AG04450 (cell line): ENCODE measurements at regions of chr20 and their contacts with region 1.

Region 1: GRCh38 chr20:45011108-45011526 is 44.8 kb downstream of the STK4 start:
- DNase-seq: peak; percentile 39
- H3K4me3 ChIP-seq: no peak overlapping the region
- H3K27ac ChIP-seq: peak overlapping the region; percentile 76
- H3K27me3 ChIP-seq: no peaks in the 10 kb centered on the region
- CTCF ChIP-seq: peak; percentile 76

Region 2: DNA sequence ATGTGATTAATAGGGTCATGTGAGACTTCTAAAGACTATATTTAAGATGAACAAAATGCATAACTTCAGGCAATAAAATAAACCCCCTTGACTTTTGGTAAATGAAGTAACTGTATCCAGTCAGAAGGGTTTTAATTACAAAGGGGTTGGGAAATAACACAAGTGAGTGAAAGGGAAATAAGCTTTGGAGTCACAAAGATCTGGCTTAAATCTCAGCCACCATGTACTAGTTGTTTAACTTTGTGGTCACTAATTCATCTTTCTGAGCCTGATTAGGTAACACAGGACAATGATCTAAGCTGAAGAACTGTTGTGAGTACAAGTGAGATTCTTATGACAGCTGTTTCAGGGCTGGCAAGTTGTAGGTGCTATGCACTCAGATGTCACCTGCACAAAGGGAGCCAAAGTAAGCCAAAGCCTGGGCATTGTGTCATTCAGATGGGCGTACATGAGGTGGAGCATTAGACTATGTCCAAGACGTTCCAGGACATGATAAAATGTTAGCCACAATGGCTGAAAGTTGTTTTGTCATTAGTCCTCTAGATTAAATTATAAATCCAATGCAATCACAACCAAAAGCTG is 64.8 kb before region 1 on chr20:
- CTCF ChIA-PET with region 1: no interaction called
- POLR2A ChIA-PET with region 1: interaction called, 10 read pairs
- DNase-seq: no peak
- H3K4me3 ChIP-seq: no peak overlapping the region
- H3K27ac ChIP-seq: no peak overlapping the region
- H3K27me3 ChIP-seq: no peaks in the 10 kb centered on the region
- CTCF ChIP-seq: no peak

Region 3: GRCh38 chr20:44979090-44979621 is 32.0 kb before region 1 on chr20:
- CTCF ChIA-PET with region 1: interaction called, 12 read pairs
- POLR2A ChIA-PET with region 1: no interaction called
- DNase-seq: no peak
- H3K4me3 ChIP-seq: no peak overlapping the region
- H3K27ac ChIP-seq: no peak overlapping the region
- H3K27me3 ChIP-seq: no peaks in the 10 kb centered on the region
- CTCF ChIP-seq: no peak

Region 4: GRCh38 chr20:44993343-44993742 is 17.8 kb before region 1 on chr20:
- CTCF ChIA-PET with region 1: interaction called, 13 read pairs
- POLR2A ChIA-PET with region 1: no interaction called
- DNase-seq: no peak
- H3K4me3 ChIP-seq: no peak overlapping the region
- H3K27ac ChIP-seq: no peak overlapping the region
- H3K27me3 ChIP-seq: no peaks in the 10 kb centered on the region
- CTCF ChIP-seq: no peak

Region 5: GRCh38 chr20:45036044-45036755 is 25.1 kb after region 1 on chr20:
- CTCF ChIA-PET with region 1: interaction called, 63 read pairs
- POLR2A ChIA-PET with region 1: no interaction called
- DNase-seq: peak; percentile 42
- H3K4me3 ChIP-seq: no peak overlapping the region
- H3K27ac ChIP-seq: peak overlapping the region; percentile 33
- H3K27me3 ChIP-seq: no peaks in the 10 kb centered on the region
- CTCF ChIP-seq: no peak

Region 6: DNA sequence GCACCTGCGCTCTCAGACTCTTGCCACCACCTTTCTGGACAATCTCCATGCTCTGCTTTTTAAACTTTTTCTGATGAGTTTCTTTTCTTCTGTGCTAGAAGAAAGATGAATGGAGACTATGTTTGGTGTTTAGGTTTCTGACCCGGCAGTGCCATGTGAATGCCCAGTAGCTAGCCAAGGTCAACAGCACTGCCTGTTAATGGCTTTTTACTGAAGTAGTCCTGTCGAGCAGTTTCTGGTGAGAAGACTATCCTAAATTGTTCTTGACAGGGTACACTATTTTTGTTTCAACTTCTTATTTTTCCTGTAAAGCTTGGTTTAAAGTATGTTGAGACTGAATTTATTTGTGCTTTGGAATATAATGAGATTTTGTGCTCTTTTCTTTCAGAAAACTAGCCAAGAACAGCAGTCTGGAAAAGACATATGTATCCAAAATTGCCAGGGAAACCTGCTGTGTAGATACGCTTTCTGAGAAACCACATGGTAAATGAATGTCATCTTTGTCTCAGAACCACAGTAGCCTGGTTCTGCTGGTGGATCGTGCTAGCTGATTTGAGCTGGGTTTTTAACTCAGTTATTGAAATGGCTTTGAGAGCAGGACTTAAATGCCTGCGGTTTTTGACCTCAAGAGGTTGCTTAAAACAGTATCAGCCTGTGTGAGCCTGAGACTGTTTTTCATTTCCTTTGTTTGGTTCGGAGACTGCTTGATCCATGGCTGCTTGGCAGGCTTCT is 41.7 kb after region 1 on chr20:
- CTCF ChIA-PET with region 1: interaction called, 10 read pairs
- POLR2A ChIA-PET with region 1: no interaction called
- DNase-seq: no peak
- H3K4me3 ChIP-seq: no peak overlapping the region
- H3K27ac ChIP-seq: peak overlapping the region; percentile 11
- H3K27me3 ChIP-seq: no peaks in the 10 kb centered on the region
- CTCF ChIP-seq: no peak

Region 7: GRCh38 chr20:45111799-45112471 is 100.8 kb after region 1 on chr20:
- CTCF ChIA-PET with region 1: interaction called, 23 read pairs
- POLR2A ChIA-PET with region 1: no interaction called
- DNase-seq: no peak
- H3K4me3 ChIP-seq: no peak overlapping the region
- H3K27ac ChIP-seq: no peak overlapping the region
- H3K27me3 ChIP-seq: peaks cover 8% of the 10 kb centered on the region
- CTCF ChIP-seq: peak; percentile 51; the same call in 1 of the 2 replicates

Region 8: DNA sequence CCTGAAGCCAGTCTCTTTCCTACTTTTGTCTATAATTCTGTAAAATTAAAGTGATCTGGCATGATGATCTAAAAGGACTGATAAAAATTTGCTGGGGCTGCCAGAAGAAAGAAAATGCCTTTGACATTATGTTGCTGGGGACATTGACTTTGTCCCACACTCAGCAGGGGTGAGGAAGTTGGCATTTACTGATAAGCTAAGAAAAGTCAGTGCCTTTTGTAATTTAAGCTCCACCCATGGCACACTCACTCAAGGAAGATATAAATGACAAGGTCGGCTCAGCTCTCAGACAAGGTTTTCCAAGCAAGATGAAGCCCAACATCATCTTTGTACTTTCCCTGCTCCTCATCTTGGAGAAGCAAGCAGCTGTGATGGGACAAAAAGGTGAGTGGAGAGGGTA is 195.6 kb after region 1 on chr20 and contains the start of gene SEMG1:
- CTCF ChIA-PET with region 1: no interaction called
- POLR2A ChIA-PET with region 1: no interaction called
- DNase-seq: no peak
- H3K4me3 ChIP-seq: no peak within 1 kb of the TSS
- H3K27ac ChIP-seq: no peak within 1 kb of the TSS
- H3K27me3 ChIP-seq: no peaks in the 10 kb centered on the region
- CTCF ChIP-seq: no peak
- polyA plus RNA-seq, gene SEMG1: not detected in 2 replicates